Left cardiac atrium (tissue), 4 donors: ENCODE measurements at regions of chr11 and their contacts with region 1.

Region 1: DNA sequence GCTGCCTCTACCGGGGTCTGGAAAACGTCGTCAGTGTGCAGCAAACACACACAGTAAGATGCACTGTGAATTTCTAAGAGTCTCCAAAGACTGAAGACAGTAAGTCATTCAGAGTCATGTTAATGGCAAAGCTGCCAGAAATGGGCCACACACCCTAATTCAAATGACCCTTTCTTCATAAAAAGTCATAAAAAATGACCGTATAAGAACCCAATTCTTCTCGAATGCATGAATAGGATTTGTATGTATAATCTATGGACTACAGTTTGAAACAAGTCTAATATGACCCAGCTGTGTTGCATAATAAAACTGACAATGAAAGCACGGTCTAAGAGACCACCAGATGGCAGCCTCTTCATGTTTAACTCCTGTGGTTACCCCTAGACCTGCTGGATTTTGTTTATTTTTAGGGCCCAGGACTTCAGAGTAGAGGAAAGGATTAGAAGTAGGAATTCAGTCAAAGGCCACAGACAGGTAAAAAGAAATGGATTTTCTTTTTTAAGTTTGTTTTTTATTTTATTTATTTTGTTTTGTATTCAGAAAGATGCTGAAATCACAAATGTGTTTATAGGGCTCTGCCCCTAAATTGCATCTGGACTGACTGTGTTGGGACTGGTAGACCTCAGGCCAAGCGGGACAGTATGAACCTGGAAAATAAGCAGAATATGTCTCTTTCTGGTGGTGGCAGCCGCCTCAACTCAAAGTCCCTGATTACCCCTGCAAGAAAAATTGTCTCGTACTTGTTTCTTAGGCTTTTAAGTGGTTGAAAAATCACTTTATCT is 32.1 kb upstream of the SLC5A12 start:
- DNase-seq: peak; percentile 38
- ATAC-seq: peak; percentile 89 to 94

Region 2: DNA sequence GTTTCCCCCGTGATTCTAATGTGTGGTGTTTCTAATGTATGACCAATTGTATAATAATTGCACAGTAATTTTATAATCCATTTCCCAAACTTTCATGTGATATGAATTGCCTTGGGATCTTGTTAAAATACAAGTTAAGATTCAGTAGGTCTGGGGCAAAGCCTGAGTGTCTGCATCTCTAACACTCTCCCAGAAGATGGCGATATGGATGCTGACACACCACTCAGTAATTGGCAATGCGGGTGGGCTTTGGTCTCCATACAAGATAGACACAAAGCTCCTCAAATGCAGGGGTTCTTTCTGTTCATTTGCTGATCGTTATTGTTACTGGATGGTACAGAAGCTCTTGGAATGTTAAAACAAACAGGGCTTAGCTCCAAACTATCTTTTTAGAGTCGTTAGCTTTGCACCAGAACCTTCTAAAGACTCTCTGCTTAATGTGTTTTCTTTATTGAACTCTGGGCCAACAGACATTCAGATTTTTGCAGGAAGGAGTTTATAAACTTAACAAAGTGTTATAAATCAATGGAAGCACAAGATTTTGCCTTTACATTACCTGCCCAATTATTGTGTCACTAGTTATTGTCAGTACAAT is 467.3 kb before region 1 on chr11:
- intact Hi-C with region 1: loop called in 1 of 2 experiments (anchors 10 kb)
- DNase-seq: no peak
- ATAC-seq: no peak

Region 3: GRCh38 chr11:26350002-26350401 is 403.9 kb before region 1 on chr11:
- intact Hi-C with region 1: no loop called
- DNase-seq: no peak
- ATAC-seq: no peak

Region 4: GRCh38 chr11:27055118-27055557 is 301.2 kb after region 1 on chr11:
- intact Hi-C with region 1: no loop called
- DNase-seq: no peak
- ATAC-seq: peak in 1 of 2 donors; percentile 42

Region 5: DNA sequence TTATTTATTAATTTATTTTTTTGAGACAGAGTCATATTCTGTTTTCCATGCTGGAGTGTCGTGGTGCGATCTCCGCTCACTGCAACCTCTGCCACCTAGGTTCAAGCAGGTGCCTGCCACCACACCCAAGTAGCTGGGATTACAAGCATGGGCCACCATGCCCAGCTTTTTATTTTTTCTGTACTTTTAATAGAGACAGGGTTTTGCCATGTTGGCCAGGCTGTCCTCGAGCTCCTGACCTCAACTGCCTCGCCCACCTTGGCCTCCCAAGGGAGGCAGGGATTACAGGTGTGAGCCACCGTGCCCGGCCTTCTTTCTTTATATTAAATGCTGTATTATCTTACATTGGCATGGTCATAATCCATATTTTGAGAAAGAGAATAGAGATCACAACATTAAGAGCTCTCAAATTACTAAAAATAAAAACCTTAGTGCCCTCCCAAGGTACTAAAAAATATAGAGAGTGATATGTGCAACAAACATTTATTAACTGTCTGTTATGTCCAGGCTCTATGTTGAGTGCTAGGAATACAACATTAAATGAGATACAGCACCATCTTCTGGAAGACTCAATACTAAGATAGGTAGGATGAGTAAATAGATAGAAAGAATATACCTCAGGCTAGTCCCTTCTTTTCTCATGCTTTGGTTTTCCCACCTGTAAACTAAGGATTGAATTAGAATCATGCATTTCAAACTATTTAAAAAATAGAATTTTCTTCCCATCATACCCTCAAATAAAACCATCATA is 370.8 kb after region 1 on chr11:
- intact Hi-C with region 1: loop called in 1 of 2 experiments (anchors 10 kb)
- DNase-seq: no peak
- ATAC-seq: peak in 1 of 2 donors; percentile 57

Region 6: GRCh38 chr11:27158722-27159679 is 405.1 kb after region 1 on chr11:
- intact Hi-C with region 1: loop called (anchors 1 to 10 kb)
- DNase-seq: peak; percentile 23
- ATAC-seq: peak; percentile 83 to 94

Region 7: DNA sequence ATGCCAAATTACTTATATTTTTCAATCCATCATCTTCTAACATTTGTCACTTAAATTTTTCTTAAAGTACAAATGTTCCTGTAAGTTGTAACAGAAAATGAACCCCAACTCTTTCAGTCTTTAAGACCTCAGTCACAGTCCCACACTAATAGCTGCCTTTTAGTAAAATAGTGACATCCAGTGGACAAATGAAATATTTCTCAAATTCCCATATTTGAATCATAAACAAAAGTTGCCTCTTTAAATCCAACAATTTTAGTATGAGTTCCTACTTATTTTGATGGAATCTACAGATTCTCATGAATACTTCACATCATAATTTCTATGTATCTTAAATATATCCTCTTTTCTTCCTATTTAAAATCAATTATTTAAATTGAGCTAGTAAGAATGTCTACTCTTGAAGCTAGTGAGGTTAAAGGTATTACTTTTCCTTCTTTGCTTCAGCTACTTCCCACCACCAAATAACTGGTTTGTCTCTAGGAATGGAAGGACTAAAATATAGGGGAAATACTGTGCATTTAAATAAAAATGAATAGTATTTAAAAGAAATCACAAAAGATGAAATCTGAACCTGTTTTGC is 743.5 kb after region 1 on chr11:
- intact Hi-C with region 1: loop called in 1 of 2 experiments (anchors 10 kb)
- DNase-seq: no peak
- ATAC-seq: peak; percentile 50 to 57